Mammary epithelial cell (primary cell): ENCODE measurements at regions of chr7 and their contacts with region 1.

Region 1: GRCh38 chr7:116511552-116512519 is 12.3 kb downstream of the CAV2 start:
- DNase-seq: peak; percentile 90
- H3K4me3 ChIP-seq: peak overlapping the region; percentile 40 to 61 (median 57)
- H3K27ac ChIP-seq: peak overlapping the region; percentile 90
- H3K4me1 ChIP-seq: peaks cover 22% of the 10 kb centered on the region
- H3K27me3 ChIP-seq: no peaks in the 10 kb centered on the region
- CTCF ChIP-seq: no peak

Region 2: DNA sequence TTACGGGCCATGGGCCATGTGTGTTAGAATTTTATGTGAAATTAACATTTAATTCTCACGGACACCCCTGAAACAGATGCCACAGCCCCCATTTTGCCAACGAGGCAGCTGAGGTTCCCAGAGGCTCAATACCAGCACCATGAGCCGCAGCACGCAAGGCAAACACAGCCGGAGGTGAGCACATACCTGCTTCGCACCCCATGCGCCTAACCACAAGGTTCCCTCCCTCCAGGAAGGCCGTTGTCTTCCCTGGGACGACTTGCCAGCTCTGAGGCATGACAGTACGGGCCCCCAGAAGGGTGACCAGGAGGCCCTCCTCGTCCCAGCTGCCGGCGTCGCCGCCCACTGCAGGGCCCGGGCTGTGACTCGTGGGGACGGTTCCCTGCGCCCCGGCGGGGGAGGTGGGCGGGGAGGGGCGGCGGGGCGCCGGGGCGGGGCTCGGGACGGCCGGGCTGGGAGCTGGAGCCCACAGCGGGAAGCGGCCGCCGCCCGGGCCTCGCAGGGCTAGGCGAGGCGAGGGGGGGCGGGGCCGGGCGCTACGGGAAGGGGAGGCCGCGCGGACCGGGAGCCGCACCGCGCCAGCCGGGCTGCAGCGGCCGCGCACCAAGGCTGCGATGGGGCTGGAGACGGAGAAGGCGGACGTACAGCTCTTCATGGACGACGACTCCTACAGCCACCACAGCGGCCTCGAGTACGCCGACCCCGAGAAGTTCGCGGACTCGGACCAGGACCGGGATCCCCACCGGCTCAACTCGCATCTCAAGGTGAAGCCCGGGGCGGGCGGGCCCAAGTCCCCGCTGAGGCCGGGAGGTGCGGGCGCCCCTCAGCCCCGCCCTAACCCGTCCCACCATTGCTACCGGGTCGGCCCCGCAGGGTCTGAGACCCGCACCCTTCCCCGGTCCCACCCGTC is 12.4 kb before region 1 on chr7 and contains the start of gene CAV2:
- CTCF ChIA-PET with region 1: interaction called, 5 read pairs
- dilution Hi-C with region 1: no loop called
- in situ Hi-C with region 1: no loop called
- intact Hi-C with region 1: loop called (anchors 1 kb)
- DNase-seq: peak; percentile 96
- H3K4me3 ChIP-seq: peak within 1 kb of the TSS; percentile 59 to 98 (median 80)
- H3K27ac ChIP-seq: peak within 1 kb of the TSS; percentile 99
- H3K4me1 ChIP-seq: peaks cover 34% of the 10 kb centered on the region
- H3K27me3 ChIP-seq: no peaks in the 10 kb centered on the region
- CTCF ChIP-seq: no peak
- total RNA-seq, gene CAV2: 253 to 385 TPM